GM10248 (cell line): ENCODE measurements at regions of chr21 and their contacts with region 1.

Region 1: GRCh38 chr21:41816220-41817165 is 49.6 kb upstream of the RIPK4 start:
- DNase-seq: peak; percentile 86
- CTCF ChIP-seq: peak; percentile 91

Region 2: GRCh38 chr21:41526478-41527087 is 289.9 kb before region 1 on chr21:
- CTCF ChIA-PET with region 1: no interaction called
- POLR2A ChIA-PET with region 1: no interaction called
- DNase-seq: no peak
- CTCF ChIP-seq: no peak

Region 3: GRCh38 chr21:41802684-41803083 is 13.8 kb before region 1 on chr21:
- CTCF ChIA-PET with region 1: interaction called, 14 read pairs
- POLR2A ChIA-PET with region 1: no interaction called
- DNase-seq: no peak
- CTCF ChIP-seq: no peak

Region 4: DNA sequence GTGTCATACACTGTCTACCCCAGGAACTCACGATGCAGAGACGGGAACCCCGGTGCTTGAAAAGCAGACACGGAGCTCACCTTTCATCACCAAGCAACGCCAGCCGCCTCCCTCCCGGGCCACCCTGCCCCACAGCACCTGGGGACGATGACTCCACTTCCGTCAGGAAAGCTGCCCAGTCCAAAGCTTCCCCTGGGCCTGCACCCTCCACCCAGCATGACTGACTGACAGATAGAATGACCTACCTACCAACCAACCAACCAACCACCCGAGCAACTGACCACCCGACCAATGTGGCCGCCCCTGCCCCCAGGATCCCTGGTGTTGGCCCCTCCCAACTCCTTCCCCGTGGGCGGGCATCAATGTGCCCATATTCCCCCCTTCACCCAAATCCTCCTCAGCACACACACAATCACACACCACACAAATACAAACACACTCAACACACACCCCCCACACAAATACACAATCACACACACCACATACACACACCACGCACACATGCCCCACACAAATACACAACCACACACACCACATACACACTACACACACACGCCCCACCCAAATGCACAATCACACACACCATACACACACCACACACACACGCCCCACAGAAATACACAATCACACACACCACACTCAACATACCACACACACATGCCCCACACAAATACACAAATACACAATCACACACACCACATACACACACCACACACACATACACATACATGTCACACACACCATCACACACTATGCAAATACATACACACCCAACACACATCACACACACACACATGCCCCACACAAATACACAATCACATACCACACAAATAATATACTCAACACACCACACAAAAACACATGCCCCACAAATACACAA is 12.2 kb after region 1 on chr21:
- CTCF ChIA-PET with region 1: interaction called, 29 read pairs
- POLR2A ChIA-PET with region 1: no interaction called
- DNase-seq: no peak
- CTCF ChIP-seq: no peak

Region 5: DNA sequence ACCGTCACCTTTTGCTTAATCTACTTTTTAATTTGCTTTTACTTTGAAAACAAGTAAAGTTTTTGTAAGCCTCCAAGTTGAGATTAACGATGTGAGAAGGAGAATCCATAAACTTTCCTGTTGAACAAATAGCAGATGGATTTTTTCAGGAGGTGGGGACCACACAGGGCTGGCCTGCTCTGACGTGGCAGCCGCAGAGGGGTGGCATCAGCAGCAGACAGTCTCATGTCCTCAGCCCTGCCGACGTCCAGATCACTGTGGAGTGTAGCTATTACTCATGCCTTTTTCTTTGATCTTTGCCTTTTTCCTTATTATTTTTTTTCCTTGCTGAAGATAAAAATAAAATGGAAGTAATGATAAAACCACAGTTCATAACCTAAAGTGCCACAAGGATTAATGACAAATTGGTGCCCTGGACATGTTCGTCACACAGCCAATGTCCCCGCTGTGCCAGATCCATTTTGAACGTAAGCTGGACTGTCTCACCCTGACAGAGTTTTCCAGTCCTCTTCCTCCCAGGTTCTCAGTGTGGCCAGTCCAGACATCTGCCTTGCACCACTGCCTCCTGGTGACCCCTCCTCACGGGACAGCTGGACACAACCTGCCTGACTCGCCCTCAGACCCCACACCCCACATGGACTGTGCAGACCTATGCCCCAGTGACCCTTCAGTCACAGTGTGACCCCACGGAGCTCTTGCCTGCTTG is 209.0 kb after region 1 on chr21:
- CTCF ChIA-PET with region 1: no interaction called
- POLR2A ChIA-PET with region 1: no interaction called
- DNase-seq: no peak
- CTCF ChIP-seq: no peak

Region 6: GRCh38 chr21:42107881-42108553 is 291.5 kb after region 1 on chr21:
- CTCF ChIA-PET with region 1: interaction called, 97 read pairs
- POLR2A ChIA-PET with region 1: no interaction called
- DNase-seq: peak; percentile 91
- CTCF ChIP-seq: peak; percentile 70

Region 7: DNA sequence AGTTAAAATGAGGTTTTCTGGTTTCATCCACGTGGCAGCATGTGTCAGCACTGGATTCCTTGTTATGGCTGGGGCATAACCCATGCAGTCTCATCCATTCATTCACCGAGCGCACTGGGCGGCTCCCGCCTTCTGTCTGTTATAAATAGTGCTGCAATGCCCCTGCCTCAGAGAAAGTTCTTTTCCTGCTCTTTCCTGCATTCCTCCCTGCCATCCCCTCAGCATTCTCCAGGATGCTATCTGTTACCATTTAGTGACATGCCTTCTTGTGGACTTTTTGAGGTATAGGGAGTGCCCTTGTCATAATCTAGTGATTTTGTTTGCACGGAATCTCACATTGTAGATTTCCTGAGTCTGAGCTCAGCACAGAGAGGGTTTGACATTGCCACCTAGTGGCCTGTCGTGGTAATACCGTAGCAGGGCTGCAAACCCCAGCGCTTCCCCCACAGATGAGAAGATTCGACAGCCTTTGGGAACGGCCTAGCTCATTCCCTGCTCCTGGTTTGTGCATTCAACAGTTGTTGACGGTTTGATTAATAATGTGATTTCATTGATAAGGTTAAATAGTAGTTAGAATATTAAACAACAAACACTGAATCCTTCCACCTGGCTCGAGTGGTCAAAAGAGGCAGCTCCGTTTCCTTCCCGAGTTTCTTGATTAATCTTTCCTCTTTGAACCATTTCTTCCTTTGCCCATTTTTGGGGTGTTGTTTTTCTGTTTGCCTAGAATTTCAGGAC is 300.9 kb after region 1 on chr21:
- CTCF ChIA-PET with region 1: interaction called, 97 read pairs
- POLR2A ChIA-PET with region 1: no interaction called
- DNase-seq: peak; percentile 84
- CTCF ChIP-seq: peak; percentile 85